Activated naive CD4-positive, alpha-beta T cell treated with anti-CD3 and anti-CD28 coated beads for 36 hours (primary cell): ENCODE measurements at regions of chr12 and their contacts with region 1.

Region 1: GRCh38 chr12:69157023-69157655 is 82.2 kb upstream of the CPSF6 start:
- DNase-seq: peak; percentile 96
- H3K4me3 Mint-ChIP-seq: peak overlapping the region; percentile 43
- H3K27ac Mint-ChIP-seq: no peak overlapping the region
- H3K4me1 Mint-ChIP-seq: peaks cover 51% of the 10 kb centered on the region
- H3K27me3 Mint-ChIP-seq: no peaks in the 10 kb centered on the region

Region 2: GRCh38 chr12:68958322-68958721 is 198.8 kb before region 1 on chr12:
- CTCF ChIA-PET with region 1: interaction called, 3 read pairs
- intact Hi-C with region 1: loop called (anchors 5 kb)
- DNase-seq: peak; percentile 80
- H3K4me3 Mint-ChIP-seq: peak overlapping the region; percentile 34
- H3K27ac Mint-ChIP-seq: peak overlapping the region; percentile 98
- H3K4me1 Mint-ChIP-seq: peaks cover 54% of the 10 kb centered on the region
- H3K27me3 Mint-ChIP-seq: no peaks in the 10 kb centered on the region

Region 3: GRCh38 chr12:69024413-69024812 is 132.7 kb before region 1 on chr12:
- CTCF ChIA-PET with region 1: no interaction called
- intact Hi-C with region 1: no loop called
- DNase-seq: no peak
- H3K4me3 Mint-ChIP-seq: no peak overlapping the region
- H3K27ac Mint-ChIP-seq: no peak overlapping the region
- H3K4me1 Mint-ChIP-seq: peaks cover 5% of the 10 kb centered on the region
- H3K27me3 Mint-ChIP-seq: peaks cover 23% of the 10 kb centered on the region

Region 4: GRCh38 chr12:69052613-69053408 is 104.3 kb before region 1 on chr12:
- CTCF ChIA-PET with region 1: no interaction called
- intact Hi-C with region 1: no loop called
- DNase-seq: peak; percentile 87
- H3K4me3 Mint-ChIP-seq: no peak overlapping the region
- H3K27ac Mint-ChIP-seq: peak overlapping the region; percentile 77
- H3K4me1 Mint-ChIP-seq: peaks cover 32% of the 10 kb centered on the region
- H3K27me3 Mint-ChIP-seq: peaks cover 12% of the 10 kb centered on the region

Region 5: GRCh38 chr12:69254046-69254445 is 96.9 kb after region 1 on chr12:
- CTCF ChIA-PET with region 1: interaction called, 88 read pairs
- intact Hi-C with region 1: loop called (anchors 1 kb)
- DNase-seq: no peak
- H3K4me3 Mint-ChIP-seq: no peak overlapping the region
- H3K27ac Mint-ChIP-seq: peak overlapping the region; percentile 71
- H3K4me1 Mint-ChIP-seq: peaks cover 39% of the 10 kb centered on the region
- H3K27me3 Mint-ChIP-seq: no peaks in the 10 kb centered on the region

Region 6: GRCh38 chr12:69470189-69471075 is 313.3 kb after region 1 on chr12 and contains the start of gene FRS2:
- CTCF ChIA-PET with region 1: no interaction called
- intact Hi-C with region 1: loop called (anchors 5 kb)
- DNase-seq: peak; percentile 93
- H3K4me3 Mint-ChIP-seq: peak within 1 kb of the TSS; percentile 98
- H3K27ac Mint-ChIP-seq: peak within 1 kb of the TSS; percentile 96
- H3K4me1 Mint-ChIP-seq: peaks cover 42% of the 10 kb centered on the region
- H3K27me3 Mint-ChIP-seq: no peaks in the 10 kb centered on the region
- total RNA-seq, gene FRS2: 7.9 TPM

Region 7: GRCh38 chr12:69639400-69640016 is 482.4 kb after region 1 on chr12:
- CTCF ChIA-PET with region 1: interaction called, 4 read pairs
- intact Hi-C with region 1: loop called (anchors 1 kb)
- DNase-seq: peak; percentile 74
- H3K4me3 Mint-ChIP-seq: no peak overlapping the region
- H3K27ac Mint-ChIP-seq: no peak overlapping the region
- H3K4me1 Mint-ChIP-seq: peaks cover 2% of the 10 kb centered on the region
- H3K27me3 Mint-ChIP-seq: no peaks in the 10 kb centered on the region

Region 8: GRCh38 chr12:70002097-70002911 is 845.2 kb after region 1 on chr12:
- CTCF ChIA-PET with region 1: no interaction called
- intact Hi-C with region 1: no loop called
- DNase-seq: no peak
- H3K4me3 Mint-ChIP-seq: no peak overlapping the region
- H3K27ac Mint-ChIP-seq: no peak overlapping the region
- H3K4me1 Mint-ChIP-seq: no peaks in the 10 kb centered on the region
- H3K27me3 Mint-ChIP-seq: peaks cover 4% of the 10 kb centered on the region